ENCODE measurements at regions of chr14 and their contacts with region 1.

Region 1: GRCh38 chr14:39102969-39103957 is at the start of gene SEC23A:
- DNase-seq: peak; percentile 88
- ATAC-seq: peak; percentile 95
- H3K4me3 Mint-ChIP-seq: peak within 1 kb of the TSS; percentile 96
- H3K27ac Mint-ChIP-seq: peak within 1 kb of the TSS; percentile 97
- H3K4me1 Mint-ChIP-seq: peaks cover 50% of the 10 kb centered on the region
- H3K27me3 Mint-ChIP-seq: no peaks in the 10 kb centered on the region
- total RNA-seq, gene SEC23A: 48.2 to 50.2 TPM

Region 2: GRCh38 chr14:39114073-39114838 is 11.0 kb after region 1 on chr14 and contains the start of gene GEMIN2:
- CTCF ChIA-PET with region 1: interaction called, 15 read pairs
- POLR2A ChIA-PET with region 1: interaction called, 37 read pairs
- DNase-seq: peak; percentile 96
- ATAC-seq: peak; percentile 99
- H3K4me3 Mint-ChIP-seq: peak within 1 kb of the TSS; percentile 95
- H3K27ac Mint-ChIP-seq: peak within 1 kb of the TSS; percentile 92
- H3K4me1 Mint-ChIP-seq: peaks cover 35% of the 10 kb centered on the region
- H3K27me3 Mint-ChIP-seq: peaks cover 2% of the 10 kb centered on the region
- total RNA-seq, gene GEMIN2: 25.4 to 26.7 TPM

Measured in activated CD8-positive, alpha-beta T cell treated with anti-CD3 and anti-CD28 coated beads, Interleukin-2, amount 10 ng/mL, durations not matched to agents 7 days and 5 days (primary cell).